ENCODE measurements at regions of chr6 and their contacts with region 1.

Region 1: GRCh38 chr6:118356054-118356453 is 192.0 kb upstream of the PLN start:
- DNase-seq: no peak
- ATAC-seq: no peak

Region 2: DNA sequence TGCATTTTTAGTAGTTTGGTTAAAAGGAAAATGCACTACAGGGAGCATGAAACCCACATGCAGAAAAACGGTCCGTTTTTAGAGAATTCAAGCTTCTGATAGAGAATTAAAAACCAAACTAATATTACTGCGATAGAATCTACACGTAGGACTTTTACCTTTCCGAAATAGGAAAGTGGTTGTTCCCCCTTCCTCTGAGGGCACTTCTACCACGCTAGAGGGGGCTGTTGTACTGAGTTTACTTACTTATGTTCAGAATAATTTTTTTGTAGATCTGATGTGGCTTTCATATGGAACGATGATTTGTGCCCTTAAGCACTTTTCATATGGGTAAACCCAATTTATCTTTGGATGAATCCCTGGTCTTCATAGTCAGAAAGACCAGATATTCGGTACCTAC is 72.3 kb before region 1 on chr6:
- intact Hi-C with region 1: no loop called
- DNase-seq: no peak
- ATAC-seq: peak; percentile 58

Region 3: GRCh38 chr6:118319894-118320649 is 36.0 kb before region 1 on chr6:
- intact Hi-C with region 1: loop called (anchors 5 kb)
- DNase-seq: no peak
- ATAC-seq: no peak